ENCODE measurements at regions of chr9 and their contacts with region 1.

Region 1: GRCh38 chr9:96854073-96854876 is at the start of gene ZNF782:
- DNase-seq: peak; percentile 67 to 93 (median 78)
- ATAC-seq: peak; percentile 88
- H3K4me3 ChIP-seq: peak within 1 kb of the TSS; percentile 87
- H3K4me3 Mint-ChIP-seq: peak within 1 kb of the TSS; percentile 100
- H3K27ac ChIP-seq: peak within 1 kb of the TSS; percentile 26 to 58
- H3K27ac Mint-ChIP-seq: peak within 1 kb of the TSS; percentile 88
- H3K4me1 ChIP-seq: peaks cover 24% of the 10 kb centered on the region
- H3K4me1 Mint-ChIP-seq: peaks cover 58% of the 10 kb centered on the region
- H3K27me3 ChIP-seq: no peaks in the 10 kb centered on the region
- H3K27me3 Mint-ChIP-seq: no peaks in the 10 kb centered on the region
- CTCF ChIP-seq: no peak
- total RNA-seq, gene ZNF782: 4.3 to 4.9 TPM

Region 2: GRCh38 chr9:96777426-96777864 is 76.8 kb before region 1 on chr9:
- CTCF ChIA-PET with region 1: interaction called, 3 read pairs
- POLR2A ChIA-PET with region 1: interaction called, 10 read pairs
- intact Hi-C with region 1: loop called in 1 of 2 experiments (anchors 5 kb)
- DNase-seq: peak in 1 of 14 experiments; percentile 24
- ATAC-seq: peak; percentile 40
- H3K4me3 ChIP-seq: peak overlapping the region; percentile 78
- H3K4me3 Mint-ChIP-seq: peak overlapping the region; percentile 99
- H3K27ac ChIP-seq: peak overlapping the region; percentile 78 to 80
- H3K27ac Mint-ChIP-seq: peak overlapping the region; percentile 99
- H3K4me1 ChIP-seq: peaks cover 13% of the 10 kb centered on the region
- H3K4me1 Mint-ChIP-seq: peaks cover 57% of the 10 kb centered on the region
- H3K27me3 ChIP-seq: no peaks in the 10 kb centered on the region
- H3K27me3 Mint-ChIP-seq: no peaks in the 10 kb centered on the region
- CTCF ChIP-seq: no peak

Region 3: DNA sequence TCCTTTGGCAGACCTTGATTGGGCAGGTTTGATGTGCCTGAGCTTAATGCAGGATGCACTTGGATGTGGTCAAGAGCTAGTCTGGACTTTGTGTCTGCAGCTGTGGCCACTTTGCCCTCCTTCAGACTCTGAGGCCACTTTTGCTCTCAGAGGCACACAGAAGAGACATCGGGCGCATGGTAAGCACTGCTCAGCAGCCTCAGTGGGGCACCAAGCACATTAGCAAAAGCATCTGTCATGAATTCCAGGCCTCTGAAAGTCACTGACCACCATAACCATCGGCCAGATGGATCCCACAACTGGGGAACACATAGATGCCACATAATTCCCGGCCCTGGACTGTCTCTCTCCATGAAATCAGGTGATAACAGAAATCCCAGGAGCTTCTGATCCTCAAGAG is 34.3 kb after region 1 on chr9:
- CTCF ChIA-PET with region 1: no interaction called
- POLR2A ChIA-PET with region 1: no interaction called
- intact Hi-C with region 1: no loop called
- DNase-seq: no peak
- ATAC-seq: no peak
- H3K4me3 ChIP-seq: no peak overlapping the region
- H3K4me3 Mint-ChIP-seq: no peak overlapping the region
- H3K27ac ChIP-seq: no peak overlapping the region
- H3K27ac Mint-ChIP-seq: no peak overlapping the region
- H3K4me1 ChIP-seq: no peaks in the 10 kb centered on the region
- H3K4me1 Mint-ChIP-seq: no peaks in the 10 kb centered on the region
- H3K27me3 ChIP-seq: no peaks in the 10 kb centered on the region
- H3K27me3 Mint-ChIP-seq: no peaks in the 10 kb centered on the region
- CTCF ChIP-seq: no peak

Region 4: DNA sequence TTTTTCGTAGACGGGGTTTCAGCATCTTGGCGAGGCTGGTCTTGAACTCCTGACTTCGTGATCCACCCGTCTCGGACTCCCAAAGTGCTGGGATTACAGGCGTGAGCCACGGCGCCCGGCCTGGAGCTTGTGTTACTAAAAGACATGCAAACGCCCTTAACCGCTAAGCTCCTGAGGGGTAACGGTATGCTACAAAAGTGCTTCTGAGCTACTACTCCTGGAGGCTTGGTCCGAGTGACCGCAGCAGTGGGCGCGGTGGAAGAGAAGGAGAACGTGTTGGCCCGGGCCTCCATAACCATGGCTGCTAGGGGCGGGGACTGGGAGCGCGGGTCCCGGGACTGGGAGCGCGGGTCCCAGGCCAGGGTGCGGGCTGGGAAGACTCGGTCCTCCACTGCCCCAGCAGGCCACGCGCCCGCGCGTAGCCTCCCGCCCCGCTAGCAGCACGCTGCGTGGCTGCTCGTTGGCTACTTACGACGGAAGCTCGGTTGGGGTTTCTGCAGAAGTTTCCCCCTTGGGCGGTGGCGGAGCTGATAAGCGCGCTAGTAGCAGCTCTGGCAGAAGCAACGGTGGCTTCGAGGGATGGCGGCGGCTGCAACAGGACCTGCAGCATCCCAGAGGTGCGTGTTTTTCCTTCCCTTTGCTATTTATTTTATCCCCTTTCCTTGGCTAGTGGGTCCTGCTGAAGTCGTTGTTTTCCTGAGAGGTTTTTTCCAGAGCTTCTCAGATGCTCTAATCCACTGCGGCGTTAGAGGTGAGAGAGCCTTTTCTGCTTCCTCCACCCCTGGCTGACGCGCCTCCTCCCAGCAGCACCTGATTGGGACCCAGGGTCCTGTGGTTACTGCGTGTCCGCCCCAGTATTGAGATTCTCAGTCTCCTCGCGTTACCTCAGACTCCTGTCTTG is 383.9 kb after region 1 on chr9:
- CTCF ChIA-PET with region 1: no interaction called
- POLR2A ChIA-PET with region 1: interaction called, 5 read pairs
- intact Hi-C with region 1: loop called in 1 of 2 experiments (anchors 5 kb)
- DNase-seq: peak; percentile 54 to 89 (median 71)
- ATAC-seq: peak; percentile 90
- H3K4me3 ChIP-seq: peak overlapping the region; percentile 61
- H3K4me3 Mint-ChIP-seq: peak overlapping the region; percentile 96
- H3K27ac ChIP-seq: peak overlapping the region; percentile 4 to 59
- H3K27ac Mint-ChIP-seq: peak overlapping the region; percentile 91
- H3K4me1 ChIP-seq: peaks cover 13% of the 10 kb centered on the region
- H3K4me1 Mint-ChIP-seq: peaks cover 27% of the 10 kb centered on the region
- H3K27me3 ChIP-seq: no peaks in the 10 kb centered on the region
- H3K27me3 Mint-ChIP-seq: no peaks in the 10 kb centered on the region
- CTCF ChIP-seq: no peak

Region 5: DNA sequence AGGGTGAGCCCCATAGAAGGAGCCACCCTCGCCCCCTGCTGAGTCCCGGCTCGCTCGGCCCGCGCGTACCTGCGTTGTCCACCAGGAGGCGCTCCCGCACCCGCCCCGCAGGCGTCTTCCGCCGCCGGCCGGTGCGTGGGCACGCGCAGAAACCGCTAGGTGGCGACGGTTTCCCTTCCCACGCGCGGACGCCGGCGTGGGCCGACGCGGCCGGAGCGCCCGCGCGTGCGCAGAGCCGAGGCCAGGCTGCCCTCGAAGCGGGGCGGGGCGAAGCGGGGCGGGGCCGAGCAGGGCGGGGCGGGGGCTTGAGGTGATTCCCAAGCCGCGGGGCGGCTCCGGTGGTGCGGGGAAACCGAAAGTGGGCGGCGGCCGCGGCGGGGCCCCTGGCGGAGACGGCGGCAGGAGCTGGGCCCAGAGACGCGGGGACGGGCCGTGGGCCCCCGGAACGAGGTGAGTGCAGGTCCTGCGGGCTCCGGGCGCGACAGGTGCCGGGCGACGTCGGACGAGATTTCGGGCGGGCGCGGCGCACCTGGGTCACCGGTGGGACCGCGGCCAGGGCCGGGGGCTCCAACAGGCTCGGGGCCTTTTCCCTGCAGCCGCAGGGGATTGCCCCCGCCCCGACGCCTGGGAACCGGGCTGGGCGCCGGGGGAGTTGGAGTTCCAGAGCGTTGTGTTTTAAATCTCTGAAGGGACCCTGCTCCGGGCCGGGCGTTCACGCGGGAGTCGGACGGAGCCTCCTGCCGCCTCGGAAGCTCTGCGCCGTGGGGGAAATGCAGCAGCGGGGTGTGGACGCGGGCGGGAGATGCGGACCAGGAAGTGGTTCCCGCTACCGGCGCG is 557.7 kb after region 1 on chr9 and contains the start of gene TDRD7:
- CTCF ChIA-PET with region 1: interaction called, 5 read pairs
- POLR2A ChIA-PET with region 1: interaction called, 5 read pairs
- intact Hi-C with region 1: loop called in 1 of 2 experiments (anchors 5 kb)
- DNase-seq: peak; percentile 81 to 98 (median 92)
- ATAC-seq: peak; percentile 88
- H3K4me3 ChIP-seq: peak within 1 kb of the TSS; percentile 79
- H3K4me3 Mint-ChIP-seq: peak within 1 kb of the TSS; percentile 90
- H3K27ac ChIP-seq: peak within 1 kb of the TSS; percentile 41 to 52
- H3K27ac Mint-ChIP-seq: peak within 1 kb of the TSS; percentile 82
- H3K4me1 ChIP-seq: peaks cover 12% of the 10 kb centered on the region
- H3K4me1 Mint-ChIP-seq: peaks cover 40% of the 10 kb centered on the region
- H3K27me3 ChIP-seq: peaks cover 0 to 5% of the 10 kb centered on the region in 2 experiments
- H3K27me3 Mint-ChIP-seq: peaks cover 20% of the 10 kb centered on the region
- CTCF ChIP-seq: peak; percentile 97
- total RNA-seq, gene TDRD7: 3.3 to 3.6 TPM

Region 6: DNA sequence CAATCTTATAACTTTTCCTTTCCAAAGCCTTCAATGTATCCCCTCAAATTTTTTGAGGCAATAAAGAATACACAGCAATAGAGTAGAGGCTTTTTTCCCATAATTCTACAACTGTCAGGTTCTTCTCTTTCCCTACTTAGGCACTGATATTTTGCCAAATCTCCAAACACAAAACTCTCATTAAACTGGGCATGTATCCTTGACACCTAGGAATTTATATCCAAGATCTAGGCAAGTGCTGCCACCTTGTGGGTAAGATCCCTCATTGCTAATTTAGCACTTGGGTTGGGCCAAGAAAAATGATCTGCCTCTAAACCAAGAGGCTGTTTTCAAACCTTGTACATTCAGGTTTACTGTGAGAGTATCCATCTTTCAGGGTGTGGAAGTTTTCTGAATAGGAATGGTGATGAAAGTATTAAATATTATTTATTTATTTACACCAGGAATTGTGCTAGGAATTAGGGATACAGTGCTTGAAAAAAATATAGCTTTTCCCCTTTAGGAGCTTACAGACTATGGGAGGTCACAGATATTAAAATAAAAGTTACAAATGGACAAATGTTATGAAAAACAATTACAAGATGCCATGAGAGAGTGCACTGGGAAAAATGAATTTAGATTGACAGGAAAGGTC is 761.3 kb after region 1 on chr9:
- CTCF ChIA-PET with region 1: interaction called, 8 read pairs
- POLR2A ChIA-PET with region 1: no interaction called
- intact Hi-C with region 1: loop called (anchors 1 to 5 kb)
- DNase-seq: peak; percentile 15 to 76 (median 44)
- ATAC-seq: peak; percentile 65
- H3K4me3 ChIP-seq: no peak overlapping the region
- H3K4me3 Mint-ChIP-seq: no peak overlapping the region
- H3K27ac ChIP-seq: no peak overlapping the region
- H3K27ac Mint-ChIP-seq: no peak overlapping the region
- H3K4me1 ChIP-seq: no peaks in the 10 kb centered on the region
- H3K4me1 Mint-ChIP-seq: no peaks in the 10 kb centered on the region
- H3K27me3 ChIP-seq: no peaks in the 10 kb centered on the region
- H3K27me3 Mint-ChIP-seq: no peaks in the 10 kb centered on the region
- CTCF ChIP-seq: peak; percentile 83

Region 7: DNA sequence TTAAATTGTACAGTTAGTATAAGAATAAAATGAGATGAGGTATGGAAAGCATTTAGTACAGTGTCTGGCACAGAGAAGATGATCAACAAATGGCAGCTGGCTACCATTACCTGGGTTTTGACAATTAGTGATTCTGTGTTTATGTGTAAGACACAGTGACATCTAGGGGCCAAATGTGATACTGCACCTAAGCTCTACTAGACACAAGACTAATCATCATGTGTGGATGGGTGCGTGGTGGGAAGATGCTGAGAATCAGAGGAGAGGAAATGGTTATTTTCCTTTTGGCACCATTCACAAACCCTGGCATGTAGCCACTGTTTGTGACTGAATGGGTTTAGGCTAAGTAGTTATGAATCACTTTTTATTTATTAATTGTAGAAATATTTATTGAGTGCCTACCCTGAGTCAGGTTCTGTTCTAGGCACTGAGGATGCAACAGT is 1511.0 kb after region 1 on chr9:
- CTCF ChIA-PET with region 1: no interaction called
- POLR2A ChIA-PET with region 1: no interaction called
- intact Hi-C with region 1: no loop called
- DNase-seq: peak in 2 of 14 experiments; percentile 5 to 15
- ATAC-seq: no peak
- H3K4me3 ChIP-seq: no peak overlapping the region
- H3K4me3 Mint-ChIP-seq: no peak overlapping the region
- H3K27ac ChIP-seq: no peak overlapping the region
- H3K27ac Mint-ChIP-seq: no peak overlapping the region
- H3K4me1 ChIP-seq: no peaks in the 10 kb centered on the region
- H3K4me1 Mint-ChIP-seq: no peaks in the 10 kb centered on the region
- H3K27me3 ChIP-seq: peaks cover 0 to 6% of the 10 kb centered on the region in 2 experiments
- H3K27me3 Mint-ChIP-seq: peaks cover 16% of the 10 kb centered on the region
- CTCF ChIP-seq: no peak